ENCODE measurements at regions of chr15 and their contacts with region 1.

Region 1: GRCh38 chr15:38367476-38367875 is 86.5 kb upstream of the FAM98B start:
- DNase-seq: no peak
- H3K4me3 ChIP-seq: no peak overlapping the region
- H3K27ac ChIP-seq: no peak overlapping the region
- H3K4me1 ChIP-seq: no peaks in the 10 kb centered on the region
- H3K27me3 ChIP-seq: no peaks in the 10 kb centered on the region
- CTCF ChIP-seq: no peak

Region 2: DNA sequence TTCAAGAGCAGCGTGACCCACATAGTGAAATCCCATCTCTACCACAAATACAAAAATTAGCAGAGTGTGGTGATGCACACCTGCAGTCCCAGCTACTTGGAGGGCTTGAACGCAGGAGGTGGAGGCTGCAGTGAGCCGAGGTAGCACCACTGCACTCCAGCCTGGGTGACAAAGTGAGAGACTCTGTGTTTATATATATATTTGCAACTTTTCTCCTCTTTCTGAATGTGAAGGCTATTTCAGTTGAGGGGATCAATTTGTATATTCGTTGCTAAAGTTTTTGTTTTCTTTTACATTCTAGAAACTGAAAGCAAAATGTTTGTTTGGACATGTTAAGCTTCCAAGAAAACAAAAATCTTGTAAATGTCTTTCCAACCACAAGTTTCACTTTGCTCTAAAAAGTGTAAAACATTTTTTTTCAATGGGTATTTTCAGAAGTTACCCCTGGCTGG is 56.7 kb after region 1 on chr15:
- intact Hi-C with region 1: loop called (anchors 10 kb)
- DNase-seq: no peak
- H3K4me3 ChIP-seq: no peak overlapping the region
- H3K27ac ChIP-seq: no peak overlapping the region
- H3K4me1 ChIP-seq: no peaks in the 10 kb centered on the region
- H3K27me3 ChIP-seq: no peaks in the 10 kb centered on the region
- CTCF ChIP-seq: no peak

Region 3: DNA sequence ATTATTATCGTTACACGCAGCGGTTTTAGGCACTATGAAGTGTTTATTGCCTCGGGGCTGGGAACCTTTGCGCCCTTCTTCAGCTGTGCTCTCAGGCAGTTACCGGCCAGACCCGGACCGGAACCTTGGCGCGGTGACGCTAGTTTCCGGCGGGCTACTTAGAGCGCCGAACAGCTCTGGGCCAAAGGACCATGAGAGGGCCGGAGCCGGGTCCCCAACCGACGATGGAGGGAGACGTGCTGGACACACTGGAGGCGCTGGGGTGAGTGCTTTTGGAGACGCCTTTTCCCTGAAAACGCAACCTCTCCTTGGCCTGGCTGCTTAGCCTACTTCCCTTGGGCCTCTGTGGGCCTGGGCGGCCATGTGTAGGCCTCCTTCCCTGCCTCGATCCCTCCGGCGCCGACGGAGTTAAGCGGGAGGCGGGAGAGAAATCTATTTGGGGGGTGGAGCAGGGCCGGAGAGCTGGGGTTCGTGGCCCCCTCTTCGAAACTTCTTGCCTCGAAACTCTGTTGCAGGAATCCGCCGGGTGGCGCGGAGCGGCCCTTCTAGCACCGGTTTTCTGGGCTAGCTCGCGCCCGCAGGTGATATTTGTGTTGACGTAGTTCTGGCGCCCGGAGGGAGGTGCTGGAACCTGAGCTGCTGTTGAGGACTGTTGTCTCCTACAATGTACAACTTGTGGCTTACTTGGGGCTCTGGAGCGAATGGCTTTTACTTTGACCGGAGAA is 86.7 kb after region 1 on chr15 and contains the start of gene FAM98B:
- intact Hi-C with region 1: no loop called
- DNase-seq: peak; percentile 92
- H3K4me3 ChIP-seq: peak within 1 kb of the TSS; percentile 78
- H3K27ac ChIP-seq: peak within 1 kb of the TSS; percentile 86
- H3K4me1 ChIP-seq: peaks cover 7% of the 10 kb centered on the region
- H3K27me3 ChIP-seq: no peaks in the 10 kb centered on the region
- CTCF ChIP-seq: no peak
- total RNA-seq, gene FAM98B: 20.0 to 20.9 TPM

Measured in colonic mucosa (tissue), 4 donors.